Activated CD8-positive, alpha-beta T cell treated with anti-CD3 and anti-CD28 coated beads for 36 hours (primary cell): ENCODE measurements at regions of chr12 and their contacts with region 1.

Region 1: DNA sequence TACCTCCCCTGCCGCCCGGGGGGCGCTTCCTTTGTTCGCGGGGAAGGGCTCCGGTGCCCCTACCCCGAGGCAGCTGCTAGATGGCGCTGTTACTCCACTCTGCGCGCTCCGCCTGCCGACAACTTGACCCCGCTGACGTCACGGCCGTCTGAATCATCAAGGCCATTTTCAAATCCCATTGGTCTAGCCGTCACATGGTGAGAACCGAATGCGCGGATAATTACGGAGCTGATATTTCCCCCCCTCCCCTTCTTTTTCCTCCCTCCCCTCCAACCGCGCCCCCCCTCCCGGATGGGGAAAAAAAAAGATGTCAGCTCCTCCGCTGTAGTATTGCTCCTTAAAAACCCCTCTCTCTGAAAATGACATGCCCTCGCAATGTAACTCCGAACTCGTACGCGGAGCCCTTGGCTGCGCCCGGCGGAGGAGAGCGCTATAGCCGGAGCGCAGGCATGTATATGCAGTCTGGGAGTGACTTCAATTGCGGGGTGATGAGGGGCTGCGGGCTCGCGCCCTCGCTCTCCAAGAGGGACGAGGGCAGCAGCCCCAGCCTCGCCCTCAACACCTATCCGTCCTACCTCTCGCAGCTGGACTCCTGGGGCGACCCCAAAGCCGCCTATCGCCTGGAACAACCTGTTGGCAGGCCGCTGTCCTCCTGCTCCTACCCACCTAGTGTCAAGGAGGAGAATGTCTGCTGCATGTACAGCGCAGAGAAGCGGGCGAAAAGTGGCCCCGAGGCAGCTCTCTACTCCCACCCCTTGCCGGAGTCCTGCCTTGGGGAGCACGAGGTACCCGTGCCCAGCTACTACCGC is at the start of gene HOXC10:
- DNase-seq: peak; percentile 97
- ATAC-seq: peak; percentile 83
- H3K4me3 Mint-ChIP-seq: peak within 1 kb of the TSS; percentile 38
- H3K27ac Mint-ChIP-seq: no peak within 1 kb of the TSS
- H3K4me1 Mint-ChIP-seq: peaks cover 27% of the 10 kb centered on the region
- H3K27me3 Mint-ChIP-seq: peaks cover 90% of the 10 kb centered on the region
- CTCF ChIP-seq: peak; percentile 62
- total RNA-seq, gene HOXC10: not detected

Region 2: DNA sequence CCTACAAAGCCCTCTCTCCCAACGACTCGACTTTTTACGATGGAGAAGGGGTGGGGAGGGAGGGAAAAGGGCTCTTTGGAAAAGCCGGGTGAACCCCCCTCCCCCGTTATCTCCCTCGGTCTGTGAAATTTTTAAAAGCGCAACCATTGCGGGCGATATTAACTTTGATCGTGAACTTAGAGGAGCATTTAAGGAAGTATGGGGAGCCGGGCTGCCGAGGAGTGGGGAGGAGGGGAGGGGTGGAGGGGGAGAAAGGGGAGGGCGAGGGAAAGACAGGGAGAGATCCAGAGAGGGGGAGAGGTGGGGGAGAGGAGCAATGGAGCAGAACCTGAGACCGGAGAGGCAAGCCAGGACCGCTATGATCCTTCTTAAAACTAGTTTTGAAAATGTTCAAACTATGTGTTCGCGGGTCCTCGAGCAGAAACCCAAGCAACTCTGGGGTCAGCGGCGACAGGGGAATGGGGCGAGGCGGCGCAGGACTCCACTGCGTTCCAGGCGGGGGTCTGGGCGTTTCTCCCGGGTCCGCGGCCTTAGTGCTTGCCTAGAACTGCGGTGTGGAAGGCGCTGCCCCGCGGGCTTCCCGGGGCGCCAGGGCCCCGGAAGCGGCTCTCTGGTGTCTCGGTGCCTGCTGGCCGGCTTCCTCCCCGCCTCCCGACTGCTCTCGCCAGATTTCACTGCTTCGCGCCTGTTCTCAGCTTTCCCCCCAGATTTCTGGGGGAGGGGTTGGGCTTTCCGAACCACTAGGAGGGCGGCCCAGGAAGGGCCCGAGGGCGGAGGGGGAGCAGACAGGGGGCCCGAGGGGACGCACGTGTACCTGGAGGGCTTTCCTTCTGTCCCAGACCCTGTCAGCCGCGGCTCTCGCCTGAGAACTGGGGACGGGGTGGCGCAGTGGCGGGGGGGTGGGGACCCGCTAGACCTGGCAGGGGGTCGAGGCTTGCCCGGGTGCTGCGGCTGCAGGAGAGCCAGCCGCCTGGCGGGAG is 10.7 kb before region 1 on chr12 and contains the start of gene HOTAIR:
- CTCF ChIA-PET with region 1: interaction called, 13 read pairs
- POLR2A ChIA-PET with region 1: no interaction called
- intact Hi-C with region 1: no loop called
- DNase-seq: peak; percentile 48
- ATAC-seq: peak; percentile 66
- H3K4me3 Mint-ChIP-seq: peak within 1 kb of the TSS; percentile 43
- H3K27ac Mint-ChIP-seq: no peak within 1 kb of the TSS
- H3K4me1 Mint-ChIP-seq: peaks cover 15% of the 10 kb centered on the region
- H3K27me3 Mint-ChIP-seq: peaks cover 78% of the 10 kb centered on the region
- CTCF ChIP-seq: no peak
- total RNA-seq, gene HOTAIR: not detected

Region 3: DNA sequence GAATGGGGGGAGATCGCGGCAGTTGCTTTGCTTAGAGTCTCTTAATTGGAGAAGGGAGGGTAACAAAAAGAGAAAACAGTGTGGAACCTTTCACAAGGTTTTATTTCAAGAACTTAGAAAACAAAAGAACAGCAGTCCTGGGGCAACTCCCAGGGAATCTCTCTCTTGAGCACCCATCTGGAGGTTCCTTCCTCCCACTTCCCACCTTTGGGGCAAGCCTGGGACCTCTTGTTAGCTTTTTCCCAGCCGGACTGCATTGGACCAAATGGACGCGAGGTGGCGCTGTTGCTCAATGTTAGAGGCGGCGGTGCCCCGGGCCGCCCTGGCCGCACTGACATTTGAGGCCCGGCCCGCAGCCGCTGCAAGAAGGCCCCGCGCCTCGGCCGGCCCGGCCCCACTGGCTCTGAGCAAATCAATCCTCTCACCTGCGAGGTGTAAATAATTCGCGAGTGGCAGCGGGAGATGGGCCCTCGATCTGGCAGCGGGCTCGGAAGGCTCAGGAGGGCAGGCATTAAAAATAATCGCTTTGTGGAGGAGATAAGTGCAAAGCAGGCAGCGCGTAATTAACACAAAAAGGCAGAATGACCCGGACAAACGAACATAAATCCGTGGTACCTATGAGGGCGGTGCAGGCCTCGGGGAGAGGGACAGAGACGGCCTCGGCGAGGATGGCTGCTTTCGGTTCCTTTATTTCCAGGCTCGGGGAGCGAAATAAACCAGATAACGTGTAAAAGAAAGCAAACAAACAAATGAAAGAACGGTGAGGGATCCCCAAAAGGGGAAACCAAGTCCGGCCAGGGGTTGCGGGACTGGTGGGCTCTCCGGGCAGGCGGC is 21.0 kb after region 1 on chr12:
- CTCF ChIA-PET with region 1: interaction called, 58 read pairs
- POLR2A ChIA-PET with region 1: interaction called, 3 read pairs
- intact Hi-C with region 1: no loop called
- DNase-seq: peak; percentile 90
- ATAC-seq: peak; percentile 83
- H3K4me3 Mint-ChIP-seq: peak overlapping the region; percentile 41
- H3K27ac Mint-ChIP-seq: no peak overlapping the region
- H3K4me1 Mint-ChIP-seq: peaks cover 20% of the 10 kb centered on the region
- H3K27me3 Mint-ChIP-seq: peaks cover 84% of the 10 kb centered on the region
- CTCF ChIP-seq: peak; percentile 94

Region 4: GRCh38 chr12:54147186-54147585 is 162.1 kb after region 1 on chr12:
- CTCF ChIA-PET with region 1: no interaction called
- POLR2A ChIA-PET with region 1: no interaction called
- intact Hi-C with region 1: no loop called
- DNase-seq: no peak
- ATAC-seq: no peak
- H3K4me3 Mint-ChIP-seq: no peak overlapping the region
- H3K27ac Mint-ChIP-seq: no peak overlapping the region
- H3K4me1 Mint-ChIP-seq: no peaks in the 10 kb centered on the region
- H3K27me3 Mint-ChIP-seq: no peaks in the 10 kb centered on the region
- CTCF ChIP-seq: no peak

Region 5: GRCh38 chr12:54191550-54192022 is 206.5 kb after region 1 on chr12:
- CTCF ChIA-PET with region 1: interaction called, 25 read pairs
- POLR2A ChIA-PET with region 1: interaction called, 3 read pairs
- intact Hi-C with region 1: no loop called
- DNase-seq: peak; percentile 87
- ATAC-seq: peak; percentile 60
- H3K4me3 Mint-ChIP-seq: no peak overlapping the region
- H3K27ac Mint-ChIP-seq: no peak overlapping the region
- H3K4me1 Mint-ChIP-seq: peaks cover 18% of the 10 kb centered on the region
- H3K27me3 Mint-ChIP-seq: peaks cover 38% of the 10 kb centered on the region
- CTCF ChIP-seq: peak; percentile 74

Region 6: DNA sequence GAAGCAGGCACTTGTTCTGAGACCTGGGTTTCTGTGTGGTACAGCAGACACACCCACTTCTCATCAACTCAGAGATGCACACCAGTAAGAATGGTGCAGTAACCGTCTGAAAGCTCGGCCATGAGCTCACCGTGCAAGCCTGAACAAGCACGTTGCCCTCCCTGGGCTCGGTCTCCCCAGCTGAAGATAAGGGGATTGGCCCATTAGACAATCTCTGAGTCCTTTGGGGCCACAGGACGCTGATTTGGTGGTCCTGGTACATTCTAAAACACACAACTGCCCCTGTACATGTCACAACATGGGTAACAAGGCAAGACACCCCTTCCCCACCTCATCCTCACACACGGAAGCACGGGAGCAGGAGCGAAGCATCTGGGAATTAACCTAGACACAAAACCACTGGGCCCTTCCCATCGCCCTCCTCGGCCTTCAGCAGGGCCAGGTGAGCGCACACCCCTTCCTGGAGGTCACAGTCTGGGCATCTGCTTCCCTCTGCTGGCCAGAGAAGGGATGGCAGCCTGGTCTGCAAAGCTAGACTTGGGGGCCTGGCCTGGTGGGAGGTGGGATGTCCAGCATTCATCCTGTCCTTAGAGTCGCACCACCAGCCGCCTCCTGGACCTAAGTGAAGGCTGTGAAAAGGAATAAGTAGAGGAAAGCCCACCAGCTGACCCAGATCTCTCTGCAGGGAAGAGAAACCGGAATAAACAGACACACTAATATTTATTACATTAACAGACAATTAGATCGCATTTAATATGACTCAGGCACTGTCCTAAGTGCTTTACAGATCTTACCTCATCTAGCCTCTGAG is 222.6 kb after region 1 on chr12:
- CTCF ChIA-PET with region 1: interaction called, 57 read pairs
- POLR2A ChIA-PET with region 1: no interaction called
- intact Hi-C with region 1: no loop called
- DNase-seq: peak; percentile 90
- ATAC-seq: peak; percentile 96
- H3K4me3 Mint-ChIP-seq: no peak overlapping the region
- H3K27ac Mint-ChIP-seq: no peak overlapping the region
- H3K4me1 Mint-ChIP-seq: no peaks in the 10 kb centered on the region
- H3K27me3 Mint-ChIP-seq: peaks cover 15% of the 10 kb centered on the region
- CTCF ChIP-seq: peak; percentile 92